ENCODE measurements at regions of chr9 and their contacts with region 1.

Region 1: GRCh38 chr9:90773617-90774016 is 28.0 kb upstream of the SYK start:
- DNase-seq: peak in 1 of 2 experiments; percentile 22
- H3K4me3 ChIP-seq: no peak overlapping the region
- H3K27ac ChIP-seq: no peak overlapping the region
- H3K4me1 ChIP-seq: no peaks in the 10 kb centered on the region
- H3K27me3 ChIP-seq: no peaks in the 10 kb centered on the region
- CTCF ChIP-seq: peak; percentile 75

Region 2: GRCh38 chr9:89974582-89974981 is 799.0 kb before region 1 on chr9:
- CTCF ChIA-PET with region 1: interaction called, 10 read pairs
- POLR2A ChIA-PET with region 1: no interaction called
- intact Hi-C with region 1: no loop called
- DNase-seq: no peak
- H3K4me3 ChIP-seq: no peak overlapping the region
- H3K27ac ChIP-seq: no peak overlapping the region
- H3K4me1 ChIP-seq: no peaks in the 10 kb centered on the region
- H3K27me3 ChIP-seq: peaks cover 48% of the 10 kb centered on the region
- CTCF ChIP-seq: no peak

Region 3: GRCh38 chr9:90142580-90142979 is 631.0 kb before region 1 on chr9:
- CTCF ChIA-PET with region 1: no interaction called
- POLR2A ChIA-PET with region 1: no interaction called
- intact Hi-C with region 1: loop called (anchors 5 kb)
- DNase-seq: peak in 1 of 2 experiments; percentile 36
- H3K4me3 ChIP-seq: no peak overlapping the region
- H3K27ac ChIP-seq: no peak overlapping the region
- H3K4me1 ChIP-seq: no peaks in the 10 kb centered on the region
- H3K27me3 ChIP-seq: peaks cover 19% of the 10 kb centered on the region
- CTCF ChIP-seq: peak; percentile 71

Region 4: GRCh38 chr9:90870621-90871326 is 97.2 kb after region 1 on chr9:
- CTCF ChIA-PET with region 1: no interaction called
- POLR2A ChIA-PET with region 1: no interaction called
- intact Hi-C with region 1: loop called (anchors 2 kb)
- DNase-seq: peak in 1 of 2 experiments; percentile 32
- H3K4me3 ChIP-seq: no peak overlapping the region
- H3K27ac ChIP-seq: no peak overlapping the region
- H3K4me1 ChIP-seq: 0 out of 2 replicates have a peak, but pooled peaks cover 5% of the 10 kb centered on the region
- H3K27me3 ChIP-seq: no peaks in the 10 kb centered on the region
- CTCF ChIP-seq: peak; percentile 92

Region 5: GRCh38 chr9:90921111-90921510 is 147.5 kb after region 1 on chr9:
- CTCF ChIA-PET with region 1: no interaction called
- POLR2A ChIA-PET with region 1: no interaction called
- intact Hi-C with region 1: no loop called
- DNase-seq: no peak
- H3K4me3 ChIP-seq: no peak overlapping the region
- H3K27ac ChIP-seq: no peak overlapping the region
- H3K4me1 ChIP-seq: 0 out of 2 replicates have a peak, but pooled peaks cover 5% of the 10 kb centered on the region
- H3K27me3 ChIP-seq: no peaks in the 10 kb centered on the region
- CTCF ChIP-seq: no peak

Measured in PC-9 (cell line).